ENCODE measurements at regions of chr1 and their contacts with region 1.

Region 1: GRCh38 chr1:217462159-217462558 is 168.7 kb downstream of the GPATCH2 start:
- DNase-seq: no peak
- ATAC-seq: no peak
- H3K4me3 ChIP-seq: no peak overlapping the region
- H3K27ac ChIP-seq: no peak overlapping the region
- H3K4me1 ChIP-seq: no peaks in the 10 kb centered on the region
- H3K27me3 ChIP-seq: no peaks in the 10 kb centered on the region
- CTCF ChIP-seq: no peak
- POLR2A ChIP-seq: no peak

Region 2: DNA sequence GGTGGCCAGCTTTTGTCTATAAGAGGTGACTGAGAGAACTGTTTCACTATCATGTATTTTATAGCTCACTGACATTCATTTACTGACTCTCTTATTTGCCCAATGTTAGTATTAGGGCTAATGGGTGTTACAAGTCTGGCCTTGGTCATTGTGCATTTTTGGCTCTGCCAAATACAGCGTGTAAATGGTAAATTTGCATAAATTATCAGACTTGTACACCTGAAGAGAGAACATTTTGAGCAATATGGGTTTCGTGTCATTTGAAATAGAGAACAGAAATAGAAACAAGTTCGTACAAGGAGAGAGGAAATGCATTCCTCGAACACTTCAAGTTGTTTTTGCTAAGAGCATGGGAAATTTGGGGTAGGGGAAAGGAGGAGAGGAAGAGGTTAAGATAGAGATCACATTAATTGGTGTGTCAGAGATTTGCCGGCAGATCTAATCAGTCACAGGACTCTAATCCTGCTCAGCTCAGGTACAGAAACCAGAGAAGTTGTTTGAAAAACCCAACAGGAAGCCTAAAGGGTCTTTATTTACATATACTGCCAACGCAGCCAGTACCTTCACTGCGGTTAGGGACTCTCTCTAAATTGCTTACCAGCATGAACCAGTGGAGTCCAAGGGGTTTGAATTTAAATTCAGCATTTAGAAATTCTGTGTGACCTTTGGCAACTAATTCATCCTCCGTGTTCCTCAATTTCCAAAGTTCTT is 92.7 kb before region 1 on chr1:
- intact Hi-C with region 1: no loop called
- DNase-seq: no peak
- ATAC-seq: no peak
- H3K4me3 ChIP-seq: no peak overlapping the region
- H3K27ac ChIP-seq: no peak overlapping the region
- H3K4me1 ChIP-seq: no peaks in the 10 kb centered on the region
- H3K27me3 ChIP-seq: no peaks in the 10 kb centered on the region
- CTCF ChIP-seq: no peak
- POLR2A ChIP-seq: no peak

Region 3: GRCh38 chr1:217407534-217408001 is 54.6 kb before region 1 on chr1:
- intact Hi-C with region 1: loop called in 1 of 10 experiments (anchors 5 kb)
- DNase-seq: no peak
- ATAC-seq: peak in 1 of 4 donors; percentile 41
- H3K4me3 ChIP-seq: peak overlapping the region in 5 of 12 donors; percentile 1 to 32 (median 11)
- H3K27ac ChIP-seq: no peak overlapping the region
- H3K4me1 ChIP-seq: no peaks in the 10 kb centered on the region
- H3K27me3 ChIP-seq: no peaks in the 10 kb centered on the region
- CTCF ChIP-seq: no peak
- POLR2A ChIP-seq: no peak

Region 4: GRCh38 chr1:217472915-217473314 is 10.8 kb after region 1 on chr1:
- intact Hi-C with region 1: no loop called
- DNase-seq: no peak
- ATAC-seq: no peak
- H3K4me3 ChIP-seq: no peak overlapping the region
- H3K27ac ChIP-seq: no peak overlapping the region
- H3K4me1 ChIP-seq: no peaks in the 10 kb centered on the region
- H3K27me3 ChIP-seq: no peaks in the 10 kb centered on the region
- CTCF ChIP-seq: no peak
- POLR2A ChIP-seq: no peak

Region 5: DNA sequence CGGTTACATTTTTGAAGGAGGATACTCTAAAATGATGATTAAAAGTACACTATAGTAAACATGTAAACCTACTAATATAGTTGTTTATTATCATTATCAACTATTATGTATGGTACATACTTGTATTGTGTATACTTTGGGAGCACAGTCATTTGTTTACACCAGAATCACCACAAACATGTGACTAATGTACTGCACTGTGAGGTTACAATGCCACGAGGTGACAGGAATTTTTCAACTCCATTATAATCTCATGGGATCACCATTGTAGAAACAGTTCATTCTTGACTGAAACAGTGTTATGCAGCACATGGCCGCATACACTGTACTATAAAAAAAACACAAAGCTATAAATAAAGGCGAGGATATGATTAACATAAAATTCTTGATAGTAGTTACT is 124.4 kb after region 1 on chr1:
- intact Hi-C with region 1: no loop called
- DNase-seq: no peak
- ATAC-seq: no peak
- H3K4me3 ChIP-seq: no peak overlapping the region
- H3K27ac ChIP-seq: no peak overlapping the region
- H3K4me1 ChIP-seq: no peaks in the 10 kb centered on the region
- H3K27me3 ChIP-seq: no peaks in the 10 kb centered on the region
- CTCF ChIP-seq: no peak
- POLR2A ChIP-seq: no peak